GM10248 (cell line): ENCODE measurements at regions of chr10 and their contacts with region 1.

Region 1: DNA sequence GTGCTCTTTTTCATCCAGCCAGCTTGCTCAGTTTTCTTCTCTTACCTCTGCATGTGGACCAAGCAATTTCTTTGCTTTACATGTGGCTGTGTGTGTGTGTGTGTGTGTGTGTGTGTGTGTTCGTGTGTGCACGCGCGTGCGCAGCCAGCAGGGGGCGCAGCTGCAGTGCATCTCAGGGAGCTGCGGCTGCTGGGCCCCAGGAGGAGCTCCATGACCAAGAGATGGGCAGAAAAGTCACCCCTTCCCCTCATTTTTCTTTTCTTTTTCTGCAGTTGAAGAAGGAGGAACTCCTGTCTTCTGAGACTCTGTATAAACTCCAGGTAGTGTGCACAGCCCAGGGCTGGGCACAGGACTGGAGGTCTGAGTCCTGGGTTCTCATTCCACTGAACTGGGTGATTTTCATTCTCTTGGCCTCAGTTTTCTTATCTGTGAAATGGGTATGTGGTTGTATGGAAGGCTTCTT is 41.8 kb downstream of the BLNK start:
- DNase-seq: peak; percentile 75
- CTCF ChIP-seq: peak; percentile 95

Region 2: DNA sequence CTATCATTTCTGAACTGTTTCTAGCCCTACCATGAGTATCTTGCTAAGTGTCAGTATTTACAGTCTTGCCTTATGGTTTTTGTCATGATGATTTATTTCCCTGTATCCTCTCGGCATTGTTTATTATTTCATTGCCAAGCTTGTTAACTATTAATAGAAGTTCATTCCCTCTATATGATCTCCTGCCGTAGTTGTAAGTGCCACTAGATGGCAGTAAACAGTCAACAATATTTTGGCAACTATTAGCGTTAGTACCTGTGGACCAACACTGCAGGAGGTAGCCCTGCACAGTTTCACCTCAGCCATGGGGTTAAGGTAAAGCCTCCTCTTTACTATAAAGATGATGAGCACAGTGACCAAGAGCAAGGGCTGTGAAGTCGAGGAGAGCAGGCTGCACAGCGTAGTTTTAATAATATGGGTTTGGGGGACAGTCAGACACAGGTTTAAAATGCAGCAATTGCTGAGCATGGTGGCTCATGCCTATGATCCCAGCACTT is 212.4 kb before region 1 on chr10:
- CTCF ChIA-PET with region 1: interaction called, 12 read pairs
- POLR2A ChIA-PET with region 1: no interaction called
- DNase-seq: peak; percentile 67
- CTCF ChIP-seq: peak; percentile 78

Region 3: GRCh38 chr10:96218826-96219225 is 10.8 kb before region 1 on chr10:
- CTCF ChIA-PET with region 1: interaction called, 29 read pairs
- POLR2A ChIA-PET with region 1: no interaction called
- DNase-seq: no peak
- CTCF ChIP-seq: no peak

Region 4: GRCh38 chr10:96257944-96258343 is 28.3 kb after region 1 on chr10:
- CTCF ChIA-PET with region 1: interaction called, 42 read pairs
- POLR2A ChIA-PET with region 1: no interaction called
- DNase-seq: no peak
- CTCF ChIP-seq: no peak

Region 5: GRCh38 chr10:96287392-96288105 is 58.0 kb after region 1 on chr10:
- CTCF ChIA-PET with region 1: interaction called, 548 read pairs
- POLR2A ChIA-PET with region 1: interaction called, 3 read pairs
- DNase-seq: peak; percentile 46
- CTCF ChIP-seq: no peak

Region 6: DNA sequence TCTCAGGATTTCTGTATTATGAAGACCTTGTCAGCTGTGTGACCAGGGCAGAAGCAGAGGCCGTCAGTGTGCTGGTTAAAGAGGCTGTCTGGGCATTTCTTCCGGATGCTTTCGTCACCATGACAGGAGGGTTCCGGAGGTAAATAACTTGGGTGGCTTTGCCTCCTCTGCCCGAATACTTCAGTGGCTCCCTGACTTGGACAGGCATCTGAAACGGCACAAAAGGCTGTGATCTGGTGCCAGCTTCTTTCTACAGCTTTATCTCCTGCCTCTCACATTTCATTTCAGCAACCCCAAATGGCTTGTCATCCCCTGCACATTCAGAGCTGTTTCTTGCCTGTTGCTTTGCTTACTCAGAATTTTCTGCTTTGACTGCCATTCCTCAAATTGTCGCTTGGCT is 97.9 kb after region 1 on chr10:
- CTCF ChIA-PET with region 1: interaction called, 19 read pairs
- POLR2A ChIA-PET with region 1: no interaction called
- DNase-seq: no peak
- CTCF ChIP-seq: no peak